Activated CD4-positive, alpha-beta T cell treated with anti-CD3 and anti-CD28 coated beads, Interleukin-2, amount 10 ng/mL, durations not matched to agents 7 days and 5 days (primary cell): ENCODE measurements at regions of chr15 and their contacts with region 1.

Region 1: GRCh38 chr15:101258238-101259144 is 6.6 kb upstream of the CHSY1 start:
- DNase-seq: peak; percentile 63
- H3K4me3 Mint-ChIP-seq: no peak overlapping the region
- H3K27ac Mint-ChIP-seq: no peak overlapping the region
- H3K4me1 Mint-ChIP-seq: peaks cover 30% of the 10 kb centered on the region
- H3K27me3 Mint-ChIP-seq: peaks cover 15% of the 10 kb centered on the region

Region 2: DNA sequence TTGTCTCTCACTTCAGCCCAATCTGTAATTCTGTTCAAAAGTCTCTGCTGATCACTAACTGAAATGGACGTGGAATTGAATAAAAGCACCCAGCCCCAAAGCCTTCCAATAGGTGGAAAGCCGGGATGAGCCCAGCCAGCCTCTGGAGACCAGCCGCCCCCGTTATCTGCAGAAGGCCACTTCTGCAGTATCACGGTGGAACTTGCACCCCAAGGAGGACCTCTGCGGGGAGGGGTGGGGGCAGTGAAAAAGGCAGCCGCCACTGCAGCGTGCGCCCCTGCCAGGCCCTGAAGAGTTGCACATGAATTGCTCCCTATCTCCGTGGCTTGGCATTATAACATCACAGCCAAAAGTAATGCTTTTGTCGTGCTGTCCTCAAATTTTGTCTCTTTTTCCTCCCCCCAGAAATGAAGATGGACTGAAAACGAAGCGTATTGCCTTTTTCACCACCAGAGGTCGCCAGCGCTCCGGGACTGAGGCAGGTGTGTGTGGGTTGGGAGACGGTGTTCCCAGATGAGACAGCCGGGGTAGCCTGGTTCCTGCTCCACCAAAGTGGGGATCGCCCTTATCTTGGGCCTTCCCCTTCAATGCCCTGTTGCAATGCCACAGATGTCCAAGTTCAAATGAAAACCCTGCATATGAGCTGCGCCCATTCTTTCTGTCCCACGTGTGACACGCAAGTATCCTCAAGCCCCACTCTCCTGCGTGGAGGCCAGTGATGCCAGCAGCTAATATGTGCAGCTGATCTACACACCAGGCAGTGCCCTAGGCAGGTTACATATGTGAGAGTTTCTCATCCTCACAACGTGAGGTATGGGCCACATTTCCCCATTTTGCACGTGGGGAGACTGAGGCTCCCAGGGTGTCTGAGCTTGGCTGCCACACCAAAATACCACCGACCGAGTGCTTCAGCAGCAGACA is 243.3 kb before region 1 on chr15:
- CTCF ChIA-PET with region 1: interaction called, 13 read pairs
- POLR2A ChIA-PET with region 1: no interaction called
- DNase-seq: peak; percentile 72
- H3K4me3 Mint-ChIP-seq: no peak overlapping the region
- H3K27ac Mint-ChIP-seq: no peak overlapping the region
- H3K4me1 Mint-ChIP-seq: no peaks in the 10 kb centered on the region
- H3K27me3 Mint-ChIP-seq: peaks cover 3% of the 10 kb centered on the region

Region 3: GRCh38 chr15:101088788-101089583 is 169.5 kb before region 1 on chr15:
- CTCF ChIA-PET with region 1: interaction called, 43 read pairs
- POLR2A ChIA-PET with region 1: no interaction called
- DNase-seq: peak; percentile 76
- H3K4me3 Mint-ChIP-seq: no peak overlapping the region
- H3K27ac Mint-ChIP-seq: no peak overlapping the region
- H3K4me1 Mint-ChIP-seq: peaks cover 8% of the 10 kb centered on the region
- H3K27me3 Mint-ChIP-seq: peaks cover 1% of the 10 kb centered on the region

Region 4: GRCh38 chr15:101269479-101270223 is 11.2 kb after region 1 on chr15:
- CTCF ChIA-PET with region 1: interaction called, 26 read pairs
- POLR2A ChIA-PET with region 1: no interaction called
- DNase-seq: no peak
- H3K4me3 Mint-ChIP-seq: no peak overlapping the region
- H3K27ac Mint-ChIP-seq: no peak overlapping the region
- H3K4me1 Mint-ChIP-seq: peaks cover 4% of the 10 kb centered on the region
- H3K27me3 Mint-ChIP-seq: no peaks in the 10 kb centered on the region

Region 5: GRCh38 chr15:101276501-101277037 is 18.1 kb after region 1 on chr15:
- CTCF ChIA-PET with region 1: interaction called, 12 read pairs
- POLR2A ChIA-PET with region 1: no interaction called
- DNase-seq: peak; percentile 22
- H3K4me3 Mint-ChIP-seq: peak overlapping the region; percentile 91
- H3K27ac Mint-ChIP-seq: peak overlapping the region; percentile 93
- H3K4me1 Mint-ChIP-seq: peaks cover 29% of the 10 kb centered on the region
- H3K27me3 Mint-ChIP-seq: no peaks in the 10 kb centered on the region